Naive thymus-derived CD4-positive, alpha-beta T cell (primary cell): ENCODE measurements at regions of chr1 and their contacts with region 1.

Region 1: GRCh38 chr1:9588551-9589143 is at the start of gene TMEM201:
- DNase-seq: peak; percentile 88 to 98 (median 93)
- ATAC-seq: peak; percentile 98
- H3K4me3 ChIP-seq: peak within 1 kb of the TSS; percentile 51
- H3K4me3 Mint-ChIP-seq: peak within 1 kb of the TSS; percentile 78 to 93 (median 86)
- H3K27ac ChIP-seq: peak within 1 kb of the TSS; percentile 69
- H3K27ac Mint-ChIP-seq: peak within 1 kb of the TSS; percentile 43 to 93 (median 65)
- H3K4me1 ChIP-seq: peaks cover 11 to 22% of the 10 kb centered on the region in 2 donors
- H3K4me1 Mint-ChIP-seq: peaks cover 20 to 37% (median 32%) of the 10 kb centered on the region in 7 donors
- H3K27me3 ChIP-seq: no peaks in the 10 kb centered on the region
- H3K27me3 Mint-ChIP-seq: no peaks in the 10 kb centered on the region
- total RNA-seq, gene TMEM201: 9.0 to 18.5 (median 10.0) TPM

Region 2: GRCh38 chr1:9234223-9235095 is 354.2 kb before region 1 on chr1 and contains the start of gene H6PD:
- CTCF ChIA-PET with region 1: no interaction called
- POLR2A ChIA-PET with region 1: no interaction called
- intact Hi-C with region 1: loop called (anchors 2 kb)
- DNase-seq: peak; percentile 60 to 88 (median 74)
- ATAC-seq: peak; percentile 88
- H3K4me3 ChIP-seq: peak within 1 kb of the TSS; percentile 74
- H3K4me3 Mint-ChIP-seq: peak within 1 kb of the TSS; percentile 83 to 97 (median 96)
- H3K27ac ChIP-seq: peak within 1 kb of the TSS; percentile 86
- H3K27ac Mint-ChIP-seq: peak within 1 kb of the TSS; percentile 91 to 99 (median 98)
- H3K4me1 ChIP-seq: peaks cover 14 to 23% of the 10 kb centered on the region in 2 donors
- H3K4me1 Mint-ChIP-seq: peaks cover 19 to 44% (median 36%) of the 10 kb centered on the region in 7 donors
- H3K27me3 ChIP-seq: no peaks in the 10 kb centered on the region
- H3K27me3 Mint-ChIP-seq: no peaks in the 10 kb centered on the region
- total RNA-seq, gene H6PD: 18.6 to 27.6 (median 19.8) TPM

Region 3: DNA sequence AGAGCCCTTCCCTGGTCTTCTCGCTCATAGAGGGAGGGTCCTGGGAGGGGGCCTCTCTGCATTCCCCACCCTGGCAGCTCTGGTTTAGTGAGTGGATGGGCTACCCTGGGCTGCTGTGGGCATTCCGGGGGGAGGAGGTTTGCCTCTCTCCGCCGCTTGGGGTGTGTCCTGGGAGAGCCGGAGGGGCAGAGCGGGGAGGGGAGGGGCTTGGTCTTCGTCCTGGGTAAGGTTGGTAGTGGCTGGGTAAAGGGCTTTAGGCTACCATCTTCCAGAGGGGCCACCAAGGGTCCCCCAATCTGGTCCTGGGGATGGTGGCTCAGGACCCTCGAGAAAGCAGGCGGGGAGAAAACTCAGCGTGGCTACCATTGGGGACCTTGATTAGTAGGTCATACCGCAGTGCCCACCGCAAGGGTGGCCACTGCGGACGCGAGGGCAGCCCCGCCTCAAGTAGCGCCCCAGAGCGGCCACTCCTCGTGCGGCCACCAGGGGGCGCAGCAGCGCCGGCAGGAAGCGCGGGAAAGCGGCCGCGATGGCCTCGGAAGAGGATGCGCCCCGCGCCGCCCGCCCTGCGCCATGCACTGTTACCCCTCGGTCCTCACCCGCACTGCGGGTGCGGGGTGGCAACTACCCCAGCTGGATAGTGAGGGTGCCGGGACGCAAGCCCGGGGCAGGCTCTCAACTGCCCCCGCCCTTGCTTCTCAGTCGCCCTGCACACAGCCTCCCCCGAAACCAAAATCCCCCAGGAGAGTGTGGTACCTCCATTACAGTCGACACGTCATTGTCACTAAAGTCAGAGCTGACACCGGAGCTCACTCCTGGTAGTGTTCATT is 93.5 kb before region 1 on chr1:
- CTCF ChIA-PET with region 1: no interaction called
- POLR2A ChIA-PET with region 1: no interaction called
- intact Hi-C with region 1: loop called in 1 of 2 experiments (anchors 5 kb)
- DNase-seq: peak; percentile 30 to 80 (median 69)
- ATAC-seq: peak; percentile 86
- H3K4me3 ChIP-seq: peak overlapping the region; percentile 40
- H3K4me3 Mint-ChIP-seq: peak overlapping the region; percentile 33 to 78 (median 72)
- H3K27ac ChIP-seq: no peak overlapping the region
- H3K27ac Mint-ChIP-seq: peak overlapping the region in 1 of 9 donors; percentile 65
- H3K4me1 ChIP-seq: peaks cover 0 to 4% of the 10 kb centered on the region in 2 donors
- H3K4me1 Mint-ChIP-seq: peaks cover 0 to 11% (median 4%) of the 10 kb centered on the region in 7 donors
- H3K27me3 ChIP-seq: no peaks in the 10 kb centered on the region
- H3K27me3 Mint-ChIP-seq: peaks cover 0 to 35% (median 0%) of the 10 kb centered on the region in 5 donors

Region 4: GRCh38 chr1:9629445-9630201 is 41.0 kb after region 1 on chr1:
- CTCF ChIA-PET with region 1: interaction called, 6 read pairs
- POLR2A ChIA-PET with region 1: interaction called, 11 read pairs
- intact Hi-C with region 1: loop called (anchors 2 kb)
- DNase-seq: peak; percentile 53 to 86 (median 83)
- ATAC-seq: peak; percentile 69
- H3K4me3 ChIP-seq: peak overlapping the region; percentile 64
- H3K4me3 Mint-ChIP-seq: peak overlapping the region; percentile 90 to 100 (median 98)
- H3K27ac ChIP-seq: peak overlapping the region; percentile 87
- H3K27ac Mint-ChIP-seq: peak overlapping the region; percentile 85 to 98 (median 94)
- H3K4me1 ChIP-seq: peaks cover 35 to 38% of the 10 kb centered on the region in 2 donors
- H3K4me1 Mint-ChIP-seq: peaks cover 46 to 72% (median 65%) of the 10 kb centered on the region in 7 donors
- H3K27me3 ChIP-seq: no peaks in the 10 kb centered on the region
- H3K27me3 Mint-ChIP-seq: peaks cover 0 to 2% (median 0%) of the 10 kb centered on the region in 5 donors

Region 5: GRCh38 chr1:9717193-9718005 is 128.8 kb after region 1 on chr1:
- CTCF ChIA-PET with region 1: no interaction called
- POLR2A ChIA-PET with region 1: interaction called, 3 read pairs
- intact Hi-C with region 1: loop called in 1 of 2 experiments (anchors 2 kb)
- DNase-seq: peak; percentile 63 to 95 (median 94)
- ATAC-seq: peak; percentile 90
- H3K4me3 ChIP-seq: peak overlapping the region; percentile 76
- H3K4me3 Mint-ChIP-seq: peak overlapping the region; percentile 80 to 98 (median 94)
- H3K27ac ChIP-seq: peak overlapping the region; percentile 63
- H3K27ac Mint-ChIP-seq: peak overlapping the region; percentile 90 to 99 (median 95)
- H3K4me1 ChIP-seq: peaks cover 60 to 87% of the 10 kb centered on the region in 2 donors
- H3K4me1 Mint-ChIP-seq: peaks cover 26 to 82% (median 66%) of the 10 kb centered on the region in 7 donors
- H3K27me3 ChIP-seq: no peaks in the 10 kb centered on the region
- H3K27me3 Mint-ChIP-seq: no peaks in the 10 kb centered on the region

Region 6: DNA sequence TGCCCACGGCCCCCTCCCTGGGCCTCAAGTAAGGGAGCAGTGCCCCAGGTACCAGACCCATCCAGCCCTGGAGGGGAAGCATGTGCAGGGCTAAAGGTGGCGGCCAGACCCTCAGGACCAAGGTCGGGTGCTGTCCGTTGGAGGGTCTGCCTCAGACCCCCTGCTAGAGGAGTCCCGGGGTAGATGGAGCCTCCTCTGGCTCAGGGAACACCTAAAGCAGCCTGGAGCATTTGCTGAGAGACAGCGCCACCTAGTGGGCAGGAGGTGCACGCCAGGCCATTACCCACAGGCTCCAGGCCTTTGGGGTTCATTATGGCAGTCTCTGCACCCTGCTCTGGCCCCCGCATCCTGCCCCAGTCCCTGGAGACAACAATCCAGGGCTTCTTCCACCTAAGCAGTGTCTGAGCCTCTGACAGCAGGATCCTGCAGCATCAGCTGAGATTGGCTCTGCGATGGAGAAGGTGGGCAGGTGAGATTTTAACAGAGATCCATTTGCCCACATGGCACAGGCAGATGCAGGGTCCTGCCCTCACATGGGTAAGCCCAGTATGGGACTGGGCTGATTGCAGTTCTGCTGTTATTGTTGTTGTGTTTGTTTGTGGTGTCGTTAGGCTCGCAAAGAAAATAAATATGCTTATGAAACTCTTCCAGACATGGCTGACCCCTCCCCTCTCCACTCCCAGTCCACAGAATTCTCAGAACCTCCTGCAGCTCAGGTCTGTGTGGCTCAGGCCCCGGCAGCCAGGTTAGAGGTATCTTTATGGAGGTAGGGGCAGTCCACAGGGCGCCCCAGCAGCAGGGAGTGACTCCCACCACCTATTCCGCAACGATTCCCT is 279.0 kb after region 1 on chr1:
- CTCF ChIA-PET with region 1: interaction called, 3 read pairs
- POLR2A ChIA-PET with region 1: no interaction called
- intact Hi-C with region 1: loop called in 1 of 2 experiments (anchors 1 kb)
- DNase-seq: peak; percentile 70 to 90 (median 84)
- ATAC-seq: peak; percentile 96
- H3K4me3 ChIP-seq: no peak overlapping the region
- H3K4me3 Mint-ChIP-seq: no peak overlapping the region
- H3K27ac ChIP-seq: no peak overlapping the region
- H3K27ac Mint-ChIP-seq: no peak overlapping the region
- H3K4me1 ChIP-seq: no peaks in the 10 kb centered on the region
- H3K4me1 Mint-ChIP-seq: peaks cover 0 to 7% (median 3%) of the 10 kb centered on the region in 7 donors
- H3K27me3 ChIP-seq: no peaks in the 10 kb centered on the region
- H3K27me3 Mint-ChIP-seq: no peaks in the 10 kb centered on the region

Region 7: DNA sequence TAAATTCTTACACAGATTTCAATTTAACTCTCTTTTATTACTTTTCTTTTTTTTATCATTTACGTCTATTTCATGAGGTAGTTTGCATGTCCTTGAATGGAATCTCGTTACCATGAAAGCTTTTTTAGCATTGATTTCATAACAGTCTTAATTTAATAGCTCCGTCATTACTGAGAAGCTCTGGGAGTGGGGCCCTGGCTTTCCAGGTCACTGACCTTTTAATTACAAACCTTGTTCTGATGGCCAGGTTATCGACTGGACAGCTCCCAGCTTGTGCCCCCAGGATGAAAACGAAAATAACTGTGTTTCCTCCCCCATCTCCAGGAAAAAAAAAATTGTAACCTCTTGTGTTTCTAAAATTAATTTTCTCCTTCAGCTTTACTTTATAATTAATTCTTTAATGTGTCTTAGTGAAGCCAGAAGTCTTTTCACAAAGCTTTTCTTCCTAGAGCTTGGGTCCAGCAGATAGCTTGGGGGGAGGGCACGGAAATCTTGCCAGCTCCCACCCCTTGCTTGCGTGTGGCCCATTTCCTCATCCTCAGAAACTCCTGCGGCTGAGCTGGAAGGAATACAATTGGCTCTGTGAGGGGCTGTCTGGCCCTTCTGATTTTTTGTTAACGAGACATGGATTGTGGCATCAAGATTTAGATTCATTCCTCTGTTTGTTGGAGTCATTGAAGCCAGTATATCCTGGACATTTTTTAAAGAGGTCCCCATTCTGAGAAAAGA is 951.8 kb after region 1 on chr1:
- CTCF ChIA-PET with region 1: no interaction called
- POLR2A ChIA-PET with region 1: no interaction called
- intact Hi-C with region 1: no loop called
- DNase-seq: no peak
- ATAC-seq: no peak
- H3K4me3 ChIP-seq: no peak overlapping the region
- H3K4me3 Mint-ChIP-seq: no peak overlapping the region
- H3K27ac ChIP-seq: no peak overlapping the region
- H3K27ac Mint-ChIP-seq: no peak overlapping the region
- H3K4me1 ChIP-seq: peaks cover 16% of the 10 kb centered on the region in 2 donors
- H3K4me1 Mint-ChIP-seq: peaks cover 26 to 40% (median 32%) of the 10 kb centered on the region in 7 donors
- H3K27me3 ChIP-seq: no peaks in the 10 kb centered on the region
- H3K27me3 Mint-ChIP-seq: no peaks in the 10 kb centered on the region

Region 8: DNA sequence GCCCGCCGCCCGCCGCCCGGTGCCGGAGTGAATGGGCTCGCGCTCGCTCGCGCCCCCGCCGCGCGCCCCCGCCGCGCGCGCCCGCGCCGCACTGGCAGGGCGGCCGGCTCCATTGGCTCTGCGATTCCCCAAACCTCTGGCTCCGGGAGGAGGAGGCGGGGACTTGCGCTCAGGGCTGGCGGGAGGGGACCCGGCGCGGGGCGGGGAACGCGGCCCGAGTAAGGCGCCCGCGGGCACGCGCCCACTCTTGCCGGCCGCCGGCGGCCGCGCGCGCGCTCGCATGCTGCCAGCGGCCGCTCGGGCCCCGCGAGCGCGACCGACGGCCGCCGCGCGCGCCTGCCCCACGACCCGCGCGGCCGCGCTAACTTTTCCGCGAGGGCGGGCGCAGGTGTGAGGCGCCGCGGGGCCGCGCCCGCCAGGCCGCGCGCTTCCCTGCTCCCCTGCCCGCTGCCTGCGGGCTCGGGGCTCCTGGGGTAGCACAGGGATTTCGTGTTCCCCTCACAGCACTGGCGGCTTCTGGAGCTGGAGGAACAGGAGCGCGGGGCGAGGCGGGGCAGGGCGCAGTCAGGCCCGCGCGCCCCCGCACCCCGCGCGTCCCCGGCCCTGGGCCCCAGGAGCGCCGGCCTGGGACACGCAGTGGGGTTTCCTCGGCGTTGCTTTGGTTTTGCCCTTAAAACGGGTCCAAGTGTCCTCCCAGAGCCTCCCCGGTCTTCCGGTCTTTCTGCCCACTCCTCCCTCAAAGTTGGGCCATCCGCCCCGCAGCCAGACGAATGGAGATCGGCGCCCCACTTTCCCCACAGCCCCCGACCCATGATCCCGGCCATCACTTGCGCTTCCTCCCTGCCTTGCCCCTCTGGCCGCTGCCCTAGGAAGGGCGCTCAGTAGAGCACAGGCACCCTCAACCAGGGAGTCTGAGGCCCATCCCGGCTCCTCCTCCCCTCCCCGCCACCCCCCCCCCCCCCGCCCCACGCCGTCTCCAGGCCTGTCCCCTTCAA is 1106.3 kb after region 1 on chr1:
- CTCF ChIA-PET with region 1: no interaction called
- POLR2A ChIA-PET with region 1: no interaction called
- intact Hi-C with region 1: loop called in 1 of 2 experiments (anchors 10 kb)
- DNase-seq: peak; percentile 60 to 82 (median 71)
- ATAC-seq: peak; percentile 81
- H3K4me3 ChIP-seq: peak overlapping the region; percentile 41
- H3K4me3 Mint-ChIP-seq: peak overlapping the region; percentile 74 to 87 (median 84)
- H3K27ac ChIP-seq: peak overlapping the region; percentile 58
- H3K27ac Mint-ChIP-seq: peak overlapping the region in 6 of 9 donors; percentile 71 to 92 (median 81)
- H3K4me1 ChIP-seq: peaks cover 10 to 15% of the 10 kb centered on the region in 2 donors
- H3K4me1 Mint-ChIP-seq: peaks cover 14 to 20% (median 16%) of the 10 kb centered on the region in 7 donors
- H3K27me3 ChIP-seq: no peaks in the 10 kb centered on the region
- H3K27me3 Mint-ChIP-seq: peaks cover 0 to 21% (median 0%) of the 10 kb centered on the region in 5 donors